Activated naive CD4-positive, alpha-beta T cell treated with anti-CD3 and anti-CD28 coated beads for 36 hours (primary cell): ENCODE measurements at regions of chr16 and their contacts with region 1.

Region 1: GRCh38 chr16:89099905-89100304 is 6.3 kb downstream of the ACSF3 start:
- DNase-seq: no peak
- H3K4me3 Mint-ChIP-seq: no peak overlapping the region
- H3K27ac Mint-ChIP-seq: peak overlapping the region; percentile 44
- H3K4me1 Mint-ChIP-seq: peaks cover 64% of the 10 kb centered on the region
- H3K27me3 Mint-ChIP-seq: no peaks in the 10 kb centered on the region

Region 2: GRCh38 chr16:88804552-88805339 is 295.2 kb before region 1 on chr16:
- CTCF ChIA-PET with region 1: no interaction called
- intact Hi-C with region 1: no loop called
- DNase-seq: peak; percentile 56
- H3K4me3 Mint-ChIP-seq: peak overlapping the region; percentile 79
- H3K27ac Mint-ChIP-seq: peak overlapping the region; percentile 68
- H3K4me1 Mint-ChIP-seq: peaks cover 43% of the 10 kb centered on the region
- H3K27me3 Mint-ChIP-seq: no peaks in the 10 kb centered on the region

Region 3: GRCh38 chr16:89026121-89026612 is 73.7 kb before region 1 on chr16:
- CTCF ChIA-PET with region 1: no interaction called
- intact Hi-C with region 1: loop called (anchors 1 kb)
- DNase-seq: peak; percentile 85
- H3K4me3 Mint-ChIP-seq: no peak overlapping the region
- H3K27ac Mint-ChIP-seq: peak overlapping the region; percentile 87
- H3K4me1 Mint-ChIP-seq: peaks cover 29% of the 10 kb centered on the region
- H3K27me3 Mint-ChIP-seq: no peaks in the 10 kb centered on the region

Region 4: DNA sequence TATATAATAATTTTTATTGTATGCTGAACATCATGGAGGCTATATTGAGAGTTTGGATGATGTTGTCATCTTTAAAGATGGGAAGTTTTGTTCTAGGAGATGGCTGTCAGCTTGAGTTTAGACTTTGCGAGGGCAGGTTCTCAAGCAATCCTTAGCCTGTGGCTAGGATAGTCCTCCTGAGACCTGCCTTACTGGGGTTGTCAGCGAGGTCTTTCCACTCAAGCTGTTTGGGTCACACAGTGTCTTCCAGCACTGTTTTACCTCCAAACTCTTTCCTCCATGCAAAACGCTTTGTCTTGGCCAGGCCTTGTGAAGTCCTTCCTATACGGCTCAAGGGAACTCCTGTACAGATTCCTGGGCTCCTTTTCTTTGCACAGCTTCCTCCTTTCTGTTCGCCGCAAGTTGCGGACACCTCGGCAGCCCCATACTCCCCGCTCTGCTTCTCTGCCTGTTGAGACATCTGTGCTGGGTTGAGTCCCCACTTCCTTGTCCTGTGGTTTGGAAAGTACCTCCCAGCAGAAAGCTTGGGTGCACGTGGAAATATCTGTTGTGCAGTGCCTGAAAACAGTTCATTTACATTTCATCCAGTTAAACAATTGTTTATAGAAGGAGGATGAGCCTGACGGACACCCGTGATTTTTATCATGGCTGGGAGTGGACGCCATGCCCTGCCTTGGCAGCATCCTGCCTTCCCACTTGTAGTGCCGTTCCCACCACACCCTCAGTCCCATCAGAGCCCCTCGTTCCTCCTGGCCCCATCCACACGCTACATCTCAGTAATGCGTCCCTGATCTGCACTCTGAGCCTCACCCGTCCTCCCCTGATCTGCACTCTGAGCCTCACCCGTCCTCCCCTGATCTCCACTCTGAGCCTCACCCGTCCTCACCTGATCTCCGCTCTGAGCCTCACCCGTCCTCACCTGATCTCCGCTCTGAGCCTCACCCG is 67.9 kb before region 1 on chr16:
- CTCF ChIA-PET with region 1: no interaction called
- intact Hi-C with region 1: loop called (anchors 1 kb)
- DNase-seq: peak; percentile 77
- H3K4me3 Mint-ChIP-seq: peak overlapping the region; percentile 65
- H3K27ac Mint-ChIP-seq: peak overlapping the region; percentile 67
- H3K4me1 Mint-ChIP-seq: peaks cover 44% of the 10 kb centered on the region
- H3K27me3 Mint-ChIP-seq: no peaks in the 10 kb centered on the region